Endothelial cell of umbilical vein (primary cell): ENCODE measurements at regions of chr3 and their contacts with region 1.

Region 1: DNA sequence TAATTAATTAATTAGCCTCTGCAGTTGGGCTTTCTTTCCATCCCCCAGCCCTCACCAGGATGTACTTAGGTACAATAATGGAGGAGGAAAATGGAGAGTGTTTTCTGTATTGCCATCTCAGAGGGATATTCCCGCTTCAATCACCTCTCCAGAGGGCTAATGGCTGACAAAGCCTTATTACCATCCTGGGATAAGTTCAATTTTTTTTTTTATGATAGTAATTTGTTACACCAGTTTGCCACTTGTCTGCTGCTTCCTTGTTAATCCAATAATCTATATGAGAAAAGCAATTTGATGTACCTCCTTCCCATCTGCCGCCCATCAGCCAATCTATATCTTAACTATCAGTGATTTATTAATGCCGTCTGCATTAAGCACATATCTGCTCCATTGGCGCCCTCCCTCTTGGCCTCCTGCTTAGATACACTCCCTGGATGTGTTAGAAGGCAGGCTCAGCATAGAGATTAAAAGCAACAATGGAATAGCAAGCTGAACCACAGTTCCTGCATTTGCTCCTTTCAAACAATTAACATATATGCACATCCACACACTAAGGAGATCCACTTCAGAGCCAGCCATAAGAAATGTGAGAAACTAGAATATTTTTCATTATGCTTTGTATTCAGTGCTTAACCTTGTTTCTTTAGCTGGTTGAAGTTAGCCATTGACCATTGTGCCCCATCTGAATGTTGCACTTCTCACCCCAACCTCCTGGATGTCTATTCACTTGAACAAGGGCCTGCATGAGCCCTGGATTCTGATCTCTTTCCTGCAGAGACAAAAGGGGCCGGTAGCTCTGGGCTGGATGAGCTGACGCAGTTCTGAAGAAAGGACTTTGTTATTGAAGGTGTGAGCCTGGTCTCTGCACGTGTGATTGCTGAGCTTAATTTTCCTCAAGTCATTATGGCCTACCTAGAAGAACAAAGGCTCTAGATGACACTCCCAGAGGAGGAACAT is 237.3 kb upstream of the GAP43 start:
- DNase-seq: no peak
- H3K4me3 ChIP-seq: no peak overlapping the region
- H3K27ac ChIP-seq: no peak overlapping the region
- H3K4me1 ChIP-seq: peaks cover 23% of the 10 kb centered on the region
- H3K27me3 ChIP-seq: peaks cover 0 to 2% of the 10 kb centered on the region in 2 experiments
- CTCF ChIP-seq: no peak
- POLR2A ChIP-seq: no peak

Region 2: GRCh38 chr3:115325539-115325938 is 60.5 kb before region 1 on chr3:
- CTCF ChIA-PET with region 1: no interaction called
- POLR2A ChIA-PET with region 1: no interaction called
- dilution Hi-C with region 1: no loop called
- intact Hi-C with region 1: no loop called
- DNase-seq: peak; percentile 47
- H3K4me3 ChIP-seq: no peak overlapping the region
- H3K27ac ChIP-seq: no peak overlapping the region
- H3K4me1 ChIP-seq: peaks cover 18% of the 10 kb centered on the region
- H3K27me3 ChIP-seq: no peaks in the 10 kb centered on the region
- CTCF ChIP-seq: no peak
- POLR2A ChIP-seq: no peak

Region 3: DNA sequence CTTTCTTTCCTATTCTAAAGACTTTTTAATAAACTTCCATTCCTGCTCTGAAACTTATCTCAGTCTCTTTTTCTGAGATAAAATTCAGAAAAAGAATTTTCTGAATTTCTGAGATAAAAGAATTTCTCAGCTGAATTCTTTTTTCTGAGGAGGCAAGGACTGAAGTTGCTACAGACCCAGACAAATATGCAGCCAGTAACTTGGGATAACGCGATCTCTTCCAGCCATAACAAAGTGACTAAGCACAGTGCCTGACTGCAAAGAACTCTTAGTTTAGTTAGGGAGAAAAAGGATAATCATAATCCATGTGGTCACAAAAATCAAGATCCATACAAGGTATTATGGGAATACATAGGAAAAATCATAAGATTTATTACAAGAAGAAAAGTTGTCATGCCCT is 15.2 kb after region 1 on chr3:
- CTCF ChIA-PET with region 1: interaction called, 3 read pairs
- POLR2A ChIA-PET with region 1: no interaction called
- dilution Hi-C with region 1: no loop called
- intact Hi-C with region 1: loop called (anchors 2 kb)
- DNase-seq: peak; percentile 61
- H3K4me3 ChIP-seq: no peak overlapping the region
- H3K27ac ChIP-seq: peak overlapping the region; percentile 44
- H3K4me1 ChIP-seq: no peaks in the 10 kb centered on the region
- H3K27me3 ChIP-seq: no peaks in the 10 kb centered on the region
- CTCF ChIP-seq: no peak
- POLR2A ChIP-seq: no peak